Heart right ventricle (tissue), 16 donors: ENCODE measurements at regions of chr3 and their contacts with region 1.

Region 1: GRCh38 chr3:16399473-16399872 is 114.0 kb downstream of the RFTN1 start:
- DNase-seq: peak; percentile 29 to 51
- ATAC-seq: peak; percentile 53 to 85 (median 62)
- H3K4me3 ChIP-seq: no peak overlapping the region
- H3K27ac ChIP-seq: peak overlapping the region in 8 of 10 donors; percentile 36 to 71 (median 65)
- H3K4me1 ChIP-seq: peaks cover 7 to 76% (median 45%) of the 10 kb centered on the region in 9 donors
- H3K27me3 ChIP-seq: no peaks in the 10 kb centered on the region
- CTCF ChIP-seq: peak in 5 of 9 donors; percentile 8 to 32 (median 15)

Region 2: GRCh38 chr3:16448639-16449070 is 49.2 kb after region 1 on chr3:
- intact Hi-C with region 1: loop called in 1 of 10 experiments (anchors 10 kb)
- DNase-seq: peak; percentile 44 to 67
- ATAC-seq: peak; percentile 64 to 90 (median 74)
- H3K4me3 ChIP-seq: no peak overlapping the region
- H3K27ac ChIP-seq: peak overlapping the region in 9 of 10 donors; percentile 0 to 73 (median 51)
- H3K4me1 ChIP-seq: peaks cover 3 to 60% (median 31%) of the 10 kb centered on the region in 9 donors
- H3K27me3 ChIP-seq: no peaks in the 10 kb centered on the region
- CTCF ChIP-seq: no peak

Region 3: GRCh38 chr3:17329927-17330326 is 930.5 kb after region 1 on chr3:
- intact Hi-C with region 1: no loop called
- DNase-seq: no peak
- ATAC-seq: no peak
- H3K4me3 ChIP-seq: no peak overlapping the region
- H3K27ac ChIP-seq: no peak overlapping the region
- H3K4me1 ChIP-seq: peaks cover 0 to 8% (median 0%) of the 10 kb centered on the region in 9 donors
- H3K27me3 ChIP-seq: no peaks in the 10 kb centered on the region
- CTCF ChIP-seq: no peak